Activated naive CD8-positive, alpha-beta T cell treated with anti-CD3 and anti-CD28 coated beads, Interleukin-2, amount 10 ng/mL, durations not matched to agents 7 days and 5 days (primary cell): ENCODE measurements at regions of chr15 and their contacts with region 1.

Region 1: DNA sequence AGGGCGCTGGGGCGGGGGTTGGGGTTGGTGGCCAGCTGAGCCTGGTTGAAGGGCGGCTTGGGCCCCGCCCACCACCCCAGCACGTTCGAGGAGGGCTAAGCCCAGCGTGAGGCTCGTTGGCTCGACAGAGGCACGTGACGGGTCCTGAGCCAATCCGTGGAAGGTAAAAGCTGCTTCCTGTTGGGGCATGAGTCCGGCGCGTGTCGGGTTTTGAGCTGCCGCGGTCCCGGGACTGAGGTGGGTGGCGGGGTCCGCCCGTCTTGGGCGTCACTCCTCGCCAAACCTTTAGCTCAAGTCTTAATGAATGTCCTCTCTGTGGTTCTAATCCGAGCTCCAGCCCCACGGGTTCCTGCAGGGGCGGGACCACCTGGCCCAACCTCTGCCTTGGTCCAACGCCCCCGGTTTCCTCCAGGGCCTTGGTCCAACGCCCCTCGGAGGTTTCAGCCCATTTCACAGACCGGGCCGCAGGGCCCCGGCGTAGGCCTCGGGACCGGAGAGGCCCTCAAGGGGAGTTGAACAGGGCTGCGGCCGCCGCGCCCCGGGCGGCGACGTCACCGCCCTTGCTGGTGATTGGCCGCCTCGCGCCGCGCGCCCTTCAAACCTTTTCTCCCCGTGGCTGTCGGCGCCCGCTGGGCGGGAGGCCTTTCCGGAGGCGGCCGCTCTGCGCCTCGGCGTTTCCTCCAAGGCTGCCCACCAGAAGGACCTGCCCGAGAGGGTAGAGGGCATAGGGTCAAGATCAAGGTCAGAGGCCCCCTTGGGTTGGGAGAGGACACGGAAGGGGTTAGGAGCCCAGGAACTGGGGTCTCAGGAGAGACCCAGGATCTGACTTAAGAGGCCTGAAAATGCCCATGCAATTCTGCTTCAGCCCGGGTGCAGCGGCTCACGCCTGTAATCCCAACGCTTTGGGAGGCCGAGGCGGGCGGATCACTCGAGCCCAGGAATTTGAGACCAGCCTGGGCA is at the start of gene RCCD1:
- DNase-seq: peak; percentile 88
- ATAC-seq: peak; percentile 94
- H3K4me3 Mint-ChIP-seq: peak within 1 kb of the TSS; percentile 86
- H3K27ac Mint-ChIP-seq: peak within 1 kb of the TSS; percentile 94
- H3K4me1 Mint-ChIP-seq: peaks cover 12% of the 10 kb centered on the region
- H3K27me3 Mint-ChIP-seq: no peaks in the 10 kb centered on the region
- total RNA-seq, gene RCCD1: 31.5 to 31.6 TPM

Region 2: DNA sequence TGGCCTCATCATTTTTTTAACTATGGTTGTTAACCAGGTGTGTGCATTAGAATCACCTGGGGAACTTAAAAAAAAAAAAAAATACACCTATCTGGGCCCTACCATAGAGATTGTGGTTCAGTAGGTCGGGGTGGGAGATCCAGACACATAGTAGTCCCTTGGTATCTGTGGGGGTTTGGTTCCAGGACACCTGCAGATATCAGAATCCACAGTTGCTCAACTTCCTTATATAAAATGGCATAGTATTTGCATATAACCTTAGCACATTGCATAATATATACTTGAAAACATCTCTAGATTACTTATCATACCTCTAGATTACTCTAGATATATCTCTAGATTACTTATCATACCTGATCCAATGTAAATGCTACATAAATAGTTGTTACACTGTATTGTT is 562.0 kb before region 1 on chr15:
- POLR2A ChIA-PET with region 1: interaction called, 10 read pairs
- DNase-seq: no peak
- ATAC-seq: no peak
- H3K4me3 Mint-ChIP-seq: no peak overlapping the region
- H3K27ac Mint-ChIP-seq: no peak overlapping the region
- H3K4me1 Mint-ChIP-seq: peaks cover 49% of the 10 kb centered on the region
- H3K27me3 Mint-ChIP-seq: no peaks in the 10 kb centered on the region

Region 3: GRCh38 chr15:90686435-90687218 is 268.4 kb before region 1 on chr15:
- POLR2A ChIA-PET with region 1: no interaction called
- DNase-seq: no peak
- ATAC-seq: peak; percentile 95
- H3K4me3 Mint-ChIP-seq: peak overlapping the region; percentile 69
- H3K27ac Mint-ChIP-seq: peak overlapping the region; percentile 96
- H3K4me1 Mint-ChIP-seq: peaks cover 40% of the 10 kb centered on the region
- H3K27me3 Mint-ChIP-seq: no peaks in the 10 kb centered on the region

Region 4: DNA sequence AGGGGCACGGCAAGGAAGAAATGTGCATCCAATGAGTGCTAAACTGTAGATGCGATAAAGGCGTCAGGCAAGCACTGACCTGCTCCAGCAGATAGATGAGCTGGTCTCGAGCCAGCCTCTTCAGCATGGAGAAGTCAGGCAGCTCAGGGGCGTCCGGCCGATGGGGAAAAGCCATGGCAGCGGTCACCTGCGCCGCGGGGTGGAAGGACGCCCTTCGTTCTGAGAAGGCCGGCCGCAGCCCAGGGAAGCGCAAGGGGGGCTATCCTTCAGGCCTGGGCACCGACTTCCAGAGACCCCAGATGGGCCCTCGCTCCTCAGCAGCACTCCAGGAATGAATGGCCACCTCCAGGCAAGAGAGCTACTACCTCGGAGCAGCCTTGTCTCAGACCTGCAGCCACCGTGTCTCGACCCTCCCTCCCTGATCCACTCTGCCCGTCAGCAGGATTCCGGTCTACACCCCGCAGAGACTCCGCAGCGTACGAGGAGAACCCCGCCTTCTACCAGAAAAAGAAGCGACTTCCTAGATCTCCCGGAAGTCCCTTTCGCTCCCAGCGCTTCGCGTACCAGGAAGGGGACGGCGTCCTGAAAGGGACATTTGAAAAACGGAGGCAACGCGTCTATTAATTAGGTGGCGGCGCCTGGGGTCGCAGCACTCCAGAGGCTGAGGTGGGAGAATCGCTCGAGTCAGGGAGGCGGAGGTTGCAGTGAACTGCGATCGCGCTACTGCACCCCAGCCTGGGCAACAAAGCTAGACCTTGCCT is 67.3 kb after region 1 on chr15 and contains the start of gene VPS33B:
- POLR2A ChIA-PET with region 1: interaction called, 10 read pairs
- DNase-seq: peak; percentile 75
- ATAC-seq: peak; percentile 70
- H3K4me3 Mint-ChIP-seq: peak within 1 kb of the TSS; percentile 97
- H3K27ac Mint-ChIP-seq: peak within 1 kb of the TSS; percentile 84
- H3K4me1 Mint-ChIP-seq: peaks cover 24% of the 10 kb centered on the region
- H3K27me3 Mint-ChIP-seq: no peaks in the 10 kb centered on the region
- total RNA-seq, gene VPS33B: 22.8 to 26.2 TPM